GM13976 (cell line): ENCODE measurements at regions of chr2 and their contacts with region 1.

Region 1: GRCh38 chr2:235135990-235136561 is 184.3 kb downstream of the SH3BP4 start:
- DNase-seq: peak; percentile 57
- CTCF ChIP-seq: peak; percentile 54

Region 2: GRCh38 chr2:235588750-235589149 is 452.7 kb after region 1 on chr2:
- in situ Hi-C with region 1: loop called (anchors 10 kb)
- DNase-seq: no peak
- CTCF ChIP-seq: no peak

Region 3: GRCh38 chr2:235746257-235747084 is 610.4 kb after region 1 on chr2:
- in situ Hi-C with region 1: loop called (anchors 25 kb)
- DNase-seq: peak; percentile 82
- CTCF ChIP-seq: peak; percentile 76